Endothelial cell of umbilical vein (primary cell): ENCODE measurements at regions of chr5 and their contacts with region 1.

Region 1: GRCh38 chr5:172764849-172765765 is 5.9 kb downstream of the DUSP1 start:
- DNase-seq: peak; percentile 99
- H3K4me3 ChIP-seq: peak overlapping the region in 2 of 3 experiments; percentile 16 to 28
- H3K27ac ChIP-seq: peak overlapping the region; percentile 92
- H3K4me1 ChIP-seq: peaks cover 44% of the 10 kb centered on the region
- H3K27me3 ChIP-seq: no peaks in the 10 kb centered on the region
- CTCF ChIP-seq: no peak
- POLR2A ChIP-seq: peak; percentile 16

Region 2: DNA sequence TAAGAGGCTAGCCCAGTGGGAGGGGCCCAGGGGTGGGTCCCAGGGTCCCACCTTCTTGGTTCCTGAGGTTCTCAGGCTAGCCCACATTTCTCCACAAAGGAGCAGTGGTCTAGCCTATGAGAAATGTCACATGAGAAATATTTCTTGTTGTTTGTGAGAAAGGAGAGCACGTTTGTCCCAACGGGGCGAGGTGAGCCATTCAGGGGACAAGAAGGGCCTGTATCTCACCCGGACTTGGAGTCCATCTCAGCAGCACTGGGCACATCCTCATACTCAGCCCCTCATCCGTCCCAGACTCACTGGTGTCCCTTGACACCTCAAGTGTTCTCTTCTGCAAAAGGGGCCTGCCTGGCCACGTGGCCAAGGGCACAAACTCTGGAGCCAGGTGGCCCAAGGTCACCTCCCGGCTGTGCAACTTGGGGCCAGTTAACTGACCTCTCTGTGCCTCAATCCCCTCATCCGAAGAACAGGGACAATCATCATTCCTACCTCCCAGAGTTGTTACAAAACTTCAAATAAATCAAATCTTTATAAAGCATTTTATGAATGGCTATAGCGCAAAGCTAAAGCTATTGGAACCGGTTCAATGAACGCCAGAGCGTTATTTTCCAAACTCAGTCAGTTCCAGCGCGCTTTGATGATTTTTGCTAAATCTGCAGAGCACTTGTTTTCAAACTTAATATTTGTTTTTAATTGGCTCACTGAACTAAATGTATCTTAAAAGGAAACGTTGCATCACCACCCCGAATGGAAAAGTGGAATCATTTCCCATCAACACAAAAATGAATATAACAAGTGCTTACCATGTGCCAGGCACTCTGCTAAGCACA is 43.6 kb before region 1 on chr5:
- CTCF ChIA-PET with region 1: interaction called, 77 read pairs
- POLR2A ChIA-PET with region 1: interaction called, 6 read pairs
- dilution Hi-C with region 1: no loop called
- intact Hi-C with region 1: loop called (anchors 1 kb)
- DNase-seq: peak; percentile 95
- H3K4me3 ChIP-seq: no peak overlapping the region
- H3K27ac ChIP-seq: no peak overlapping the region
- H3K4me1 ChIP-seq: peaks cover 8% of the 10 kb centered on the region
- H3K27me3 ChIP-seq: no peaks in the 10 kb centered on the region
- CTCF ChIP-seq: no peak
- POLR2A ChIP-seq: no peak

Region 3: DNA sequence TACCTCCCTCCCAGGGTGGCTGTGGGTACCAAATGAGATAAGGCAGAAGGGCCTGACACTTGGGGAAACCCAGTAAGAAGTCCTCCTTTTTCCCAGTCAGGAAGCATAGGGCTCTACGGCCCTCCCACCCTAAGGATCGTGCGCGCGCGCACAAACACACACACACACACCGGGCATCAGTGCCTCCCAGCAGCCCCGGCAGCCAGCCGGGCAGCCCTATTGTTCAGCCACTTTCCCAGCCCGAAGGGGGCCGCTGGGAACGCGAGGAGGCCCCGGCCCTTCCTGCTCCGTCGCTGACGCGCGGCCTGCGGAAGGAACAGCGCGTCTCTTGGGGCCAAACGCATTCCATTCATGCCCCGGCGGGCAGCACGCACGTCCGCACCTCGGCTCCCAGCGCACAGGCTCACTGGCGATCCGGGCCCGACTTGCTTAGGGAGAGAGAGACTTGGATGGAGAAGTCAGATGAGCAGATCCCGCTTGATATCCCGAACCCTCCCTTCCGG is 16.7 kb before region 1 on chr5:
- CTCF ChIA-PET with region 1: interaction called, 3 read pairs
- POLR2A ChIA-PET with region 1: interaction called, 4 read pairs
- dilution Hi-C with region 1: no loop called
- intact Hi-C with region 1: loop called (anchors 1 kb)
- DNase-seq: peak; percentile 96
- H3K4me3 ChIP-seq: no peak overlapping the region
- H3K27ac ChIP-seq: peak overlapping the region; percentile 79
- H3K4me1 ChIP-seq: peaks cover 13% of the 10 kb centered on the region
- H3K27me3 ChIP-seq: no peaks in the 10 kb centered on the region
- CTCF ChIP-seq: no peak
- POLR2A ChIP-seq: peak; percentile 52

Region 4: DNA sequence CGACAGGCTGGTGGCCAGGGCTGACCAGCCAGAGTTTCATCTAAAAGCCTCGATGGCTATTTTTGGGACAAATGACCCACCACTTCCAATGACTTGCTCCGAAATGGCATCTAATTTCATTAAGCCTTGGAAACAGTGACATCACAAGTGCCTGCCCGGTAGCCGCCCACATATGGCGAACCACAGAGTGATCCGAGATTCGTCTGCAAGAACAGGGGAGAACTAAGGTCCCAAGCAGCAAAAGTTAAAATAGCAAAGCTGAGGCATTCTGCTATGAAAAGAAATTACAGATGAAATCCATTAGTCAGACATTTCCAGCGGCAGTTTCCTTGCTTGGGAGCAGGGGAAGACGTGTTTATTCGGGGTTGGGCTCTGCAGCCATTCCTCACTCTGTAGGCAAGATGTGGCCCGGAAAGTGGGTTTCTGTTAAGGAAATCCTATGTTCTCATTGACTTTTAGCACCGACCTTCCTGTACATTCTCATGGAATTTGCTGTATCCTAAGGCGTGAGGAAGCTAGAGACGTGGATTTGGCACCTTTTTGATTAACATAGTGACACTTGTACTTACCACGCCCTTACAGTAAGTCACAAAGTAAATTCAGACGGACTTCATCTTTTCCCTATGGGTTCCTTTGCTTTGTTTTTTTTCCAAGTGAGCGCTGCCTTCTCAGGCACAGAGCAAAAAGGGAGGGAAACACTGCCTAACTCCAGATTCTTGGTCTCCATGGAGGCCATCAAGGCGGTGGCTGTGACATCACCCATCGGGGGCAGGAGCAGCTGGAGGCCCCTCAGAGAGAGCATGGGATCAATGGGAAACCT is 114.0 kb after region 1 on chr5:
- CTCF ChIA-PET with region 1: interaction called, 6 read pairs
- POLR2A ChIA-PET with region 1: interaction called, 10 read pairs
- dilution Hi-C with region 1: no loop called
- intact Hi-C with region 1: loop called (anchors 1 kb)
- DNase-seq: peak; percentile 92
- H3K4me3 ChIP-seq: peak overlapping the region in 1 of 3 experiments; percentile 27
- H3K27ac ChIP-seq: peak overlapping the region; percentile 96
- H3K4me1 ChIP-seq: peaks cover 45% of the 10 kb centered on the region
- H3K27me3 ChIP-seq: no peaks in the 10 kb centered on the region
- CTCF ChIP-seq: no peak
- POLR2A ChIP-seq: peak; percentile 66

Region 5: GRCh38 chr5:172897481-172898217 is 132.5 kb after region 1 on chr5:
- CTCF ChIA-PET with region 1: interaction called, 31 read pairs
- POLR2A ChIA-PET with region 1: interaction called, 7 read pairs
- dilution Hi-C with region 1: no loop called
- intact Hi-C with region 1: no loop called
- DNase-seq: peak; percentile 91
- H3K4me3 ChIP-seq: no peak overlapping the region
- H3K27ac ChIP-seq: peak overlapping the region; percentile 87
- H3K4me1 ChIP-seq: peaks cover 41% of the 10 kb centered on the region
- H3K27me3 ChIP-seq: no peaks in the 10 kb centered on the region
- CTCF ChIP-seq: no peak
- POLR2A ChIP-seq: peak; percentile 52